ENCODE measurements at regions of chr5 and their contacts with region 1.

Region 1: DNA sequence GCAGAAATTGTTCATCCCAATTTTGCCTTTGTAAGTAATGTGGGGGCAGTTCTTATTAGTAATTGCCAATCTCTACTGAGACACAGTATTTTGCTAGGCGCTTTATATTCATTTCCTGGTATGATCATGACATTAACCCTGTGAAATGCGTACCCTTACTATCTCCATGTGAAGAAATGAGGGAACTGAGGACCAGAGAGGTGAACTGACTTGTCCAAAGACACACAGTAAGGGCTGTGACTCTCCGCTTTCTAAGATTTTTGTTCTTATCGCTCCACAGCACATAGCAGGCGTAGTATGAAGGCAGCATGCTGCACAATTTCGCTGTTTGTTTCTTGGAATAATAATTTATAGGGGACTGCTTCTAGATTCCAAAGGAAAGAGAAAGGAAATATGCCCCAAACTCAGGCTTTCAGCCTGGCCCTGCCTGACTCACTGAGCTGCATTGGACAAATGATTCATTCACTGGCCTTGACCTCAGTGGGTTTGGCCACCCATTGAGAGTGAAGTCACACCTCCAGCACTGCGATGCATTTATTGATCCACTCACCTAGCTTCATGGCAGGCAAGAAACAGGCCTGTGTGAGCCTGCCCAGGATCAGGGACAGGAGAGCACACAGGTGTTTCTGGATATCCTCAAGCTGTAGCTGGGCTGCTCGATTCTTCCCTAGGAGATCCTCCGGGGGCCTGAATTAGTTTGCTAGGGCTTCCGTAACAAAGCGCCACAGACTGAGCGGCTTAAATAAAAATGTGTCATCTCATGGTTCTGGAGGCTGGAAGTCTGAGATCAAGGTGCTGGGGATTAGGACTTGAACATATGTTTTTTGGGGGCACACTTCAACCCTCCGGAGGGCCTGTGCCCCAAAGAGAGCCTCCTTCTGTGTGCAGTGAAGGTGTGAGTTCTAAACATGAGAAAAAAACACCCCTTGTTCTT is 7.2 kb upstream of the DUSP1 start:
- DNase-seq: no peak
- H3K4me3 ChIP-seq: no peak overlapping the region
- H3K27ac ChIP-seq: peak overlapping the region; percentile 98 to 100
- H3K4me1 ChIP-seq: peaks cover 15% of the 10 kb centered on the region
- H3K27me3 ChIP-seq: no peaks in the 10 kb centered on the region
- CTCF ChIP-seq: no peak
- POLR2A ChIP-seq: no peak

Region 2: GRCh38 chr5:172065501-172065990 is 712.6 kb before region 1 on chr5:
- intact Hi-C with region 1: no loop called
- DNase-seq: no peak
- H3K4me3 ChIP-seq: no peak overlapping the region
- H3K27ac ChIP-seq: no peak overlapping the region
- H3K4me1 ChIP-seq: no peaks in the 10 kb centered on the region
- H3K27me3 ChIP-seq: no peaks in the 10 kb centered on the region
- CTCF ChIP-seq: no peak
- POLR2A ChIP-seq: no peak

Region 3: DNA sequence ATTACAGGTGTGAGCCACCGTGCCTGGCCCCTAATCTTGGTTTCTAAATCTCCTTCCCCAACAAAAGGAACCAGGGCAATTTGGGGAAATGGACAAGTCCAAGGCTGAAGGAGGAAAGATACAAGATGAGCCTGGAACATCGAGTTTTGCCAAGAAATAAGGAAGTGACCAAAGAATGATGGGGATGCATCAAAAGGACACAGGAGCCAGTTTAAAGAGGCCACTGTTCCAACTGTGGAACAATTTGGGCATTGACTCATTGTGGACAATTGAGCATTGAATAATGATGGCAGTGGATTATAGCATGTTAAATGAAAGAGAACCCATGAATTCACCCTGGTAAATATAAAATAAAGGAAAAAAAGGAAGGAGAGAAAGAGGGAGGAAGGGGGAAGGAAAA is 54.6 kb before region 1 on chr5:
- intact Hi-C with region 1: no loop called
- DNase-seq: no peak
- H3K4me3 ChIP-seq: no peak overlapping the region
- H3K27ac ChIP-seq: no peak overlapping the region
- H3K4me1 ChIP-seq: peaks cover 3% of the 10 kb centered on the region
- H3K27me3 ChIP-seq: no peaks in the 10 kb centered on the region
- CTCF ChIP-seq: no peak
- POLR2A ChIP-seq: no peak

Region 4: DNA sequence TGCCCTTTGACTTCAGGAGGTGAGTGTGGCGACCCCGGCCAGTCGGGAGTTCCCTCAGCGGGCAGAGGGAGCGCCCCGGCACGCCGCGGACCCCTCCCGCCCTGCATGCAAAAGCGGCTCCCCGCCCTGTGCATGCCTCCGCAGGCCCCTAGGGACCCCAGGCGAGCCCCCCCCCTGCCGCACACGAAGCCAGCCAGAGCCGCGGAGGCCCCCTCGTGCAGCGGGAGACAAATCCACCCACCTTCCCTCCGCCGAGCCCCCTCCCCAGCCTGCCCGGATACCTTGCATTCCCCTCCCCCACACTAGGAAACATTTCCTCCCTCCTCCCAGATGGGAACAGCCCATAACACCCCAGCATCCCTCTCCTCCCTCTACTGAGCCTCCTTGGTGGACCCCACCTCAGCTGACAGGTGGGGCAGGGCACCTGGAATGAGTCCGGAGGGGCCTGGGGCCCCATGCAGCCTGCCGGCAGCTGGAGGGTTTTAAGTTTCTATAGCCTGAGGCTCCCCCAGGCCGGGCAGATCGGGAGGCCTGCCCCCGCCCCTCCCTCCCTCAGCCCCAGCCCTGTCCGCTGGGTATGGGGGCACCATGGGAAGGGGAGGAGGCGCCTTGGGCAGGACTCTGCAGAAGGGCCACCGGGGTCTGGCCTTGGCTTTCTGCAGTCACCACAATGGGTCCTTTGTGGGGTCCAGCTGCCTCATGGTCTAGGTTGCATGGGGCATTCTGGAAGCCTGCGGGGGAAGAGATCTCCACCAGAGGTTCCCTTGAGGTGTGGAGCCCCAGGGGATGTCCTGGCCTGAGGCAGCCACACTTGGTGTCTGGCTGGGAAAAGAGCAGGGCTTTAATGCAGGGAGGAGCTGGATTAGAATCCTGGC is 56.5 kb after region 1 on chr5:
- intact Hi-C with region 1: loop called (anchors 5 kb)
- DNase-seq: no peak
- H3K4me3 ChIP-seq: peak overlapping the region; percentile 89 to 98
- H3K27ac ChIP-seq: peak overlapping the region; percentile 91 to 96
- H3K4me1 ChIP-seq: peaks cover 24% of the 10 kb centered on the region
- H3K27me3 ChIP-seq: no peaks in the 10 kb centered on the region
- CTCF ChIP-seq: no peak
- POLR2A ChIP-seq: no peak